K562 (cell line): ENCODE measurements at regions of chr12 and their contacts with region 1.

Region 1: DNA sequence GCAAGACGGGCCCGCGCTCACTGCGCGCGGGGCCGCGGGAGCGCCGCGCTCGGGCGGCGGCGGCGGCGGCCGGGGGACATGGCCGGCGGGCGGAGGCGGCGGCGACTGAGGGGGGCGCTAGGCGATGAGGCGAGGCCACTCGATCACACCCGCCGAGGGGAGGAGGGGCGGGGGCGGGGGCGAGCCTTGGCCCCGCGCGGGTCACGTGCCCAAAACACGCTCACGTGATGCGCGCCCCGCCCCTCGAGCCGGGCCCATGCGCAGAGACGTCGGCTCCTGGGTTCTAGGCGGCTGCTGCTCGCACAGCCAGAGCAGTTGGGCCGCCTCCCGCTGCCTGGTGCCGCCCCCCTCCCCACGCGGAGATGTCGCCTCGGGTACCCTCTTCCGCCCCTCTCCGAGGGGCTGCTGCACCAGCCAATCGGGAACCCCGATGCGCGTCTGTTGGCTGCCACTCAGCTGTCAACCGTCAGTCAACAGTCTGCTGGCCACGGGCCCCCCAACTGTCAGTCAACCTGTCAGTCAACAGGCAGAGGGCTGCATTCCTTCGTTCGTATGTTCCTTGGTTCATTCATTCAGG is at the start of gene SPPL3:
- DNase-seq: peak; percentile 94 to 95 (median 95)
- ATAC-seq: peak; percentile 91
- H3K4me3 ChIP-seq: peak within 1 kb of the TSS; percentile 98
- H3K27ac ChIP-seq: peak within 1 kb of the TSS; percentile 84
- H3K4me1 ChIP-seq: peaks cover 13 to 21% of the 10 kb centered on the region in 2 experiments; a peak in 4 of 5 replicates
- H3K27me3 ChIP-seq: no peaks in the 10 kb centered on the region
- CTCF ChIP-seq: peak in 2 of 3 experiments; percentile 17 to 26; a peak in 1 of 6 replicates
- EP300 ChIP-seq: no peak
- POLR2A ChIP-seq: peak; percentile 80
- RAD21 ChIP-seq: no peak; a peak in 1 of 4 replicates
- polyA plus RNA-seq, gene SPPL3: 3.8 to 5.3 TPM

Region 2: DNA sequence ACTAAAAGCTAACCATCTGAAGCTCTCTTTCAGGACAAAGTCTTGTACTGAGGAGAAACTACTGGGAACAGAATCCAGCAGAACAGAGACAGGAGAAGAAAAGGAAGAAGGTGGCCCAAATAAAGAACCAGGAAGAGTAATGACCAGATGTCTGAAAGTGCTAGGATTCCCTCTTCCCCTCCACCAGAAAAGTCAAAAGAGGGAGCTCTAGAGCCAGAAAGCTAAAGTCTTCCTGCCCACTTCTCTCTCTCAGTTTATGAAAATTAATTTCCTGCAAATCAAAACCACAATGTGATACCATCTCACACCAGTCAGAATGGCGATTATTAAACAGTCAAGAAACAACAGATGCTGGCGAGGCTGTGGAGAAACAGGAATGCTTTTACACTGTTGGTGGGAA is 47.3 kb before region 1 on chr12:
- CTCF ChIA-PET with region 1: no interaction called
- POLR2A ChIA-PET with region 1: no interaction called
- in situ Hi-C with region 1: no loop called
- intact Hi-C with region 1: loop called (anchors 5 kb)
- DNase-seq: peak in 1 of 4 experiments; percentile 23
- ATAC-seq: peak; percentile 70
- H3K4me3 ChIP-seq: no peak overlapping the region
- H3K27ac ChIP-seq: no peak overlapping the region
- H3K4me1 ChIP-seq: peaks cover 4 to 11% of the 10 kb centered on the region in 2 experiments; a peak in 2 of 5 replicates
- H3K27me3 ChIP-seq: no peaks in the 10 kb centered on the region
- CTCF ChIP-seq: peak; percentile 23 to 61 (median 35); a peak in 3 of 6 replicates
- EP300 ChIP-seq: no peak
- POLR2A ChIP-seq: no peak
- RAD21 ChIP-seq: peak in 1 of 2 experiments; percentile 62; a peak in 2 of 4 replicates

Region 3: DNA sequence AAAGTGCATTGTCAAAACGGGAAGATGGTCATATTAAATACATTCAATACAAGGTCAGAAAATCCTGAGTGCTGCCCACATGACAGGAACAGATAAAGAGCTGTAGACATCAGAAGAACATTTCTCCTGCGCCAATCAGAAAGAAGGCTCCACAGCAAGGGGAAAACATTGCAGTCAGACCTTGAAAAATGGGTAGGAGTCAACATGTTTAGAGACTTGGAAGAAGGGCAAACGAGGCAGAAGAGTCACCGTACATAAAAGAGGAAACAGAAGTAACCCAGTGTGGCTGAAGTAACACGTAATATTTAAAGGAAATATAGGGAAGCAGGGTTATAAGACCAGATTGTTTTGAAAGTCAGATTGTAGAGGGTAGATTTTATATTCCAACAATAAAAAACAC is 12.0 kb before region 1 on chr12:
- CTCF ChIA-PET with region 1: no interaction called
- POLR2A ChIA-PET with region 1: interaction called, 40 read pairs
- in situ Hi-C with region 1: no loop called
- intact Hi-C with region 1: no loop called
- DNase-seq: peak in 2 of 4 experiments; percentile 58
- ATAC-seq: peak; percentile 73
- H3K4me3 ChIP-seq: no peak overlapping the region
- H3K27ac ChIP-seq: peak overlapping the region; percentile 37; the same call in 1 of the 3 replicates
- H3K4me1 ChIP-seq: peaks cover 23 to 26% of the 10 kb centered on the region in 2 experiments; a peak in 4 of 5 replicates
- H3K27me3 ChIP-seq: no peaks in the 10 kb centered on the region
- CTCF ChIP-seq: no peak
- EP300 ChIP-seq: no peak
- POLR2A ChIP-seq: no peak
- RAD21 ChIP-seq: no peak